Left ventricle myocardium inferior (tissue), 1 donor: ENCODE measurements at regions of chr10 and their contacts with region 1.

Region 1: DNA sequence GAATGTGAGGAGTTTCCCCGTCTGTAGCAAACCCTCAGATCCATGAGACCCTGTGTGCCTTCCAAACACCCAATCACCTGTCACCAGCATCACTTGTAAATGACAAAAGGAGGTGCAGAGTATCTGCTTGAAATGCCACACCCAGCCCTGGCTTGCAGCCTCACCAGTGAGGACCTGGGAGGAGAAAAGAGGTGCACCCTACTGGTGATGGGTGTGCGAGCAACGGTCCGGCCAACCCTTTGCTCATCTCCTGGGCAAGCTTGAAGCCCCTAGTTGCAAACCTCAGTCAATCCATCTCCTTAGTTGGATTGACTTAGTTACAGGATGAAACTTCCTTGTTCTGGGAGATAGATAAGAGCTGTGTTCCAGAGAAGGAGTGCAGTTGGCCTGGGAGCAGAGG is 62.4 kb upstream of the WAPL start:
- DNase-seq: no peak
- H3K4me3 ChIP-seq: no peak overlapping the region
- H3K27ac ChIP-seq: no peak overlapping the region
- H3K4me1 ChIP-seq: peaks cover 8% of the 10 kb centered on the region
- H3K27me3 ChIP-seq: no peaks in the 10 kb centered on the region
- CTCF ChIP-seq: no peak

Region 2: GRCh38 chr10:86399879-86400704 is 183.9 kb before region 1 on chr10:
- intact Hi-C with region 1: loop called (anchors 5 kb)
- DNase-seq: peak; percentile 93
- H3K4me3 ChIP-seq: peak overlapping the region; percentile 77
- H3K27ac ChIP-seq: peak overlapping the region; percentile 82
- H3K4me1 ChIP-seq: peaks cover 39% of the 10 kb centered on the region
- H3K27me3 ChIP-seq: peaks cover 27% of the 10 kb centered on the region
- CTCF ChIP-seq: peak; percentile 98

Region 3: GRCh38 chr10:87079106-87079836 is 495.3 kb after region 1 on chr10:
- intact Hi-C with region 1: no loop called
- DNase-seq: no peak
- H3K4me3 ChIP-seq: no peak overlapping the region
- H3K27ac ChIP-seq: no peak overlapping the region
- H3K4me1 ChIP-seq: peaks cover 12% of the 10 kb centered on the region
- H3K27me3 ChIP-seq: no peaks in the 10 kb centered on the region
- CTCF ChIP-seq: no peak